ENCODE measurements at regions of chr14 and their contacts with region 1.

Region 1: DNA sequence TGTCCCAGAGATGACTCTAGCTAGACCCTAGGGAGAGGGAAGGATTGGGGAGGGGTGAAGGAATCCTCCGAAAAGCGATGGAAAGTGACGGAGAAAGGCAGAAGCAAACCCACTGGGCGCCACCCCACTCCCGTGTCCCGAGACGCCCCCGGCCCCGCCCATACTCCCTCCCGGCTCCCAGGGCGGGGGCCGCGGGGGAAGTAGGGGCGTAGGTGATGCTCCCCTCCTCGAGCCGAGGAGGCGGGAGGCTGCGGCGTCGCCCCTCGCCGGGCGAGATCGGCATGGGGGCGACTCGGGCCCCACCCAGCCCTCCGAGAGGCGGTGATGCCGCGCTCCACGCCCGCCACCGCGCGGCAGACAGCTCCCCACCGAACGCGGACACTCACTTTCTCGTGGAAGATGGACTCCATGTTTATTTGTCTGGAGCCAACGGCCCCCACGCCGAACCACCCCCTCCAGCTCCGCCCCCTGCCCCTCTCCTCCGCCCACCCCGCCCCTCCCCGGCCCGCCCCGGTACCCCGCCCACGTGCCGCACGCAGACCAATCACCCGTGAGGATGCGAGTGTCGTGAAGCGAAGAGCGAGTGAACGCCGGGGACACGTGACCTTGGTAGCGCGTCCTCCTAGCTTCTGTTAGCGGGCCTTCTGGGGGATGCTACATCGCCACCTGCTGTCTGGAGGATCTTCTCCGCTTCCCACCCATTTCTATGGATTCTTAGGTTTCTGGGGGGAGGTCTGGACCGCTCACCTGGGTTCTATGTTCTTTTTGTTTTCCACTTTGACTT is at the start of gene ATXN3:
- DNase-seq: peak; percentile 96
- ATAC-seq: peak; percentile 89
- H3K4me3 ChIP-seq: peak within 1 kb of the TSS; percentile 81 to 91 (median 90)
- H3K27ac ChIP-seq: peak within 1 kb of the TSS; percentile 64
- H3K4me1 ChIP-seq: peaks cover 59% of the 10 kb centered on the region
- H3K27me3 ChIP-seq: no peaks in the 10 kb centered on the region; a peak in 1 of 5 replicates
- CTCF ChIP-seq: peak; percentile 87
- EP300 ChIP-seq: 0 out of 4 replicates have a peak, but pooled peaks of 1 of the 2 experiments have one; percentile 15
- POLR2A ChIP-seq: peak; percentile 44 to 71; a peak in 3 of 4 replicates
- RAD21 ChIP-seq: no peak; the same call in 1 of the 2 replicates
- total RNA-seq, gene ATXN3: 17.3 and 30.2 TPM in 2 replicates

Region 2: DNA sequence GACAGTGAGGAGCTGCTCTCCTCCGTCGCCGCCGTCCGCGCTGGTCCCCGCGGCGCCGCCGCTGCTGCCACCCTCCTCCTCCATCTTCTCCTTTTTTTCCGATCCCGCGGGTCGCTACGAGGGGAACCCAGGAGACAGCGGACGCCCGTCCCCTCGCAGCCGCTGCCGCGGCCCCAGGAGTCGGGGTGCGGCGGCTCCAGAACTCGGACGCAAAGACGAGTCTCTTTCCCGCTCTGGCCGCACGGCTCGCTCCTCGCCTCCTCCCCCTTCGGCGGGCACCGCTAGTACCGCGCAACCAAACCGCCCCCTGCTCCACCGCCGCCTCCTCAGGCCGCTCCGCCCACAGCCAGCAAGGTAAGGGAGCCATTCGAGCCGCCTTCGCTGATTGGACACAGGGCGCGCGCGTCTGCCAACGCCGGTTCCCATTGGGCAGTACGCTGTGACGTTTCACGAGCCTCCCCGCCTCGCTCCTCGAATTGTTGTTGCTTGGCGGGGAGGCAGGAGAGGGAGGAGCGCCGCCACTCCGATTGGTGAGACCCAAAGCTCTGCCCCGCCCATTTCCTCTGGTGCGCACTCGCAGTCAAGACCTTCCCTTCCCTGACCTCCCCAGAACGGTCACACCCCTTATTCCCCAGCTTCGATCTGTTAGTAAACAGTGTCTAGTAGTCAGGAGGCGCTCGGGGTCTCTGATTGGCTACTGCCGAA is 1045.8 kb before region 1 on chr14 and contains the start of gene RPS6KA5:
- CTCF ChIA-PET with region 1: no interaction called
- POLR2A ChIA-PET with region 1: no interaction called
- in situ Hi-C with region 1: no loop called
- intact Hi-C with region 1: loop called (anchors 5 kb)
- DNase-seq: peak; percentile 100
- ATAC-seq: peak; percentile 95
- H3K4me3 ChIP-seq: peak within 1 kb of the TSS; percentile 65 to 81 (median 80)
- H3K27ac ChIP-seq: peak within 1 kb of the TSS; percentile 93
- H3K4me1 ChIP-seq: peaks cover 44% of the 10 kb centered on the region
- H3K27me3 ChIP-seq: no peaks in the 10 kb centered on the region
- CTCF ChIP-seq: peak; percentile 16; the same call in 1 of the 2 replicates
- EP300 ChIP-seq: peak in 1 of 2 experiments; percentile 40; a peak in 1 of 4 replicates
- POLR2A ChIP-seq: peak in 1 of 2 experiments; percentile 61; a peak in 1 of 4 replicates
- RAD21 ChIP-seq: peak; percentile 71
- total RNA-seq, gene RPS6KA5: 0.58 and 0.65 TPM in 2 replicates

Region 3: GRCh38 chr14:92039719-92040430 is 66.5 kb before region 1 on chr14 and contains the start of gene TRIP11:
- CTCF ChIA-PET with region 1: no interaction called
- POLR2A ChIA-PET with region 1: interaction called, 25 read pairs
- in situ Hi-C with region 1: loop called (anchors 5 kb)
- intact Hi-C with region 1: loop called (anchors 1 kb)
- DNase-seq: peak; percentile 80
- ATAC-seq: peak; percentile 98
- H3K4me3 ChIP-seq: peak within 1 kb of the TSS; percentile 77 to 91 (median 89)
- H3K27ac ChIP-seq: peak within 1 kb of the TSS; percentile 97
- H3K4me1 ChIP-seq: peaks cover 43% of the 10 kb centered on the region
- H3K27me3 ChIP-seq: no peaks in the 10 kb centered on the region; a peak in 2 of 5 replicates
- CTCF ChIP-seq: peak; percentile 26; the same call in 1 of the 2 replicates
- EP300 ChIP-seq: 0 out of 4 replicates have a peak, but pooled peaks of 1 of the 2 experiments have one; percentile 39
- POLR2A ChIP-seq: peak; percentile 90 to 97
- RAD21 ChIP-seq: no peak
- total RNA-seq, gene TRIP11: 32.8 and 51.4 TPM in 2 replicates

Region 4: DNA sequence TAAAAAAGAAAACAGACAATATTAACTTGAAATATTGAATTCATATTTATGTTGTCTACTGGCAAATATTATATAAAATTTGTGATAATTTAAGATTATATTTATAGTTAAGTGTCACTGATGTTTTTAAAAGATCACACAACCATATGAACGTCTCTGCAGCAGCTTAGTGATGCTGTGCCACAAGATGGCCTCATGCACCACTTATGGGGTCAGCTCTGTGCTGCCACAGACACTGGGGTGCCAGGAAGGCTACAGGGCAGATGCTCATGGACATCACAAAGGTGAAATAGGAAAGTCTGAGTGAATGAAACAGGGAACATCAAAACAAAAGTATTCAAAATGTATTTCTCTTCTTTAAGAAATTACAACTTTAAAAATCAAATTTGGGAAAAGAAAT is 13.0 kb before region 1 on chr14:
- CTCF ChIA-PET with region 1: no interaction called
- POLR2A ChIA-PET with region 1: interaction called, 10 read pairs
- in situ Hi-C with region 1: no loop called
- intact Hi-C with region 1: no loop called
- DNase-seq: no peak
- ATAC-seq: peak; percentile 66
- H3K4me3 ChIP-seq: no peak overlapping the region
- H3K27ac ChIP-seq: no peak overlapping the region
- H3K4me1 ChIP-seq: no peaks in the 10 kb centered on the region
- H3K27me3 ChIP-seq: no peaks in the 10 kb centered on the region
- CTCF ChIP-seq: peak; percentile 55
- EP300 ChIP-seq: no peak
- POLR2A ChIP-seq: no peak
- RAD21 ChIP-seq: no peak

Region 5: DNA sequence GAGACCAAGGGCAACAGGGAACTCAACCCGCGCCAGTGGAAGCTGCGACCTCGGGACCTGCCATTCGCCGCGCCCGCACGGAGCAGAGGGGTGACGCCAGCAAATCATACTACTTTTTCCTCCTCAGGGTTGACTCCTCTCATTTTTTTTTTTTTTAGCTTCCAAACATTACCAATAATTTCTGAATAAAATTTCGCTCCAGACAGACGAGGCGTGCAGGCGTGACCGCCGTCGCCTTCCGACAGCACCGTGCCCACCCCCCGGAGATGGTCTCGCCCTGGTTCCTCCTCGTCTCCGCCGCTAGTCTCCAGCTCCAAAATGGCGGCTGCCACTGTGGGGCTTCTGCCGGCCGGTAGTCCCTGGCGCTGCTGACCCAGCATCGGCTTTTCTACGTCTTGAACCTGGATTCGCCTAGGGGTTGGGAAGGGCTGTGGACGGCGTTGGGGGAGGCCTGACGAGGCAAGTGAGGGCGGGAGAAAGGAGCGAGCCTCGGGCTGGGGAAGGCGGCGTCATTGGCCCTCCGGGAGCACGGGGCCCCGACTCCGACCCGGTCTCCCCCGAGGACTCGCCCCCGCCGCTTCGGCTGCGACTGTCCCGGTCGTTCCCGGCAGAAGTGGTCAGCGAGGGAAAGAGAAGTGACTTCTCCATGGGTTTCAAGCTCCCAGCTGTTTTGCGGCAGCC is 15.5 kb after region 1 on chr14 and contains the starts of genes CPSF2 and NDUFB1:
- CTCF ChIA-PET with region 1: no interaction called
- POLR2A ChIA-PET with region 1: interaction called, 93 read pairs
- in situ Hi-C with region 1: no loop called
- intact Hi-C with region 1: no loop called
- DNase-seq: peak; percentile 63
- ATAC-seq: peak; percentile 95
- H3K4me3 ChIP-seq: peak within 1 kb of the TSS; percentile 89 to 97 (median 90)
- H3K27ac ChIP-seq: peak within 1 kb of the TSS; percentile 94
- H3K4me1 ChIP-seq: peaks cover 37% of the 10 kb centered on the region
- H3K27me3 ChIP-seq: no peaks in the 10 kb centered on the region; a peak in 1 of 5 replicates
- CTCF ChIP-seq: no peak
- EP300 ChIP-seq: peak in 1 of 2 experiments; percentile 20; a peak in 1 of 4 replicates
- POLR2A ChIP-seq: peak; percentile 86 to 94
- RAD21 ChIP-seq: no peak
- total RNA-seq, gene CPSF2: 67.9 and 126 TPM in 2 replicates
- total RNA-seq, gene NDUFB1: 281 and 308 TPM in 2 replicates

Region 6: GRCh38 chr14:92551044-92551841 is 444.9 kb after region 1 on chr14:
- CTCF ChIA-PET with region 1: no interaction called
- POLR2A ChIA-PET with region 1: no interaction called
- in situ Hi-C with region 1: no loop called
- intact Hi-C with region 1: no loop called
- DNase-seq: no peak
- ATAC-seq: no peak
- H3K4me3 ChIP-seq: no peak overlapping the region
- H3K27ac ChIP-seq: no peak overlapping the region
- H3K4me1 ChIP-seq: peaks cover 24% of the 10 kb centered on the region
- H3K27me3 ChIP-seq: no peaks in the 10 kb centered on the region
- CTCF ChIP-seq: no peak
- EP300 ChIP-seq: no peak
- POLR2A ChIP-seq: no peak
- RAD21 ChIP-seq: no peak

Measured in HepG2 (cell line).